ENCODE measurements at regions of chr17 and their contacts with region 1.

Region 1: GRCh38 chr17:37239690-37240334 is 136.0 kb upstream of the C17orf78 start:
- DNase-seq: no peak
- H3K4me3 ChIP-seq: no peak overlapping the region
- H3K27me3 ChIP-seq: no peaks in the 10 kb centered on the region
- CTCF ChIP-seq: peak; percentile 73

Region 2: GRCh38 chr17:36601303-36602029 is 638.3 kb before region 1 on chr17 and contains the start of gene MRM1:
- CTCF ChIA-PET with region 1: interaction called, 23 read pairs
- POLR2A ChIA-PET with region 1: no interaction called
- DNase-seq: peak; percentile 72
- H3K4me3 ChIP-seq: peak within 1 kb of the TSS; percentile 92
- H3K27me3 ChIP-seq: no peaks in the 10 kb centered on the region
- CTCF ChIP-seq: peak; percentile 30
- polyA plus RNA-seq, gene MRM1: 3.0 and 3.9 TPM in 2 replicates

Region 3: DNA sequence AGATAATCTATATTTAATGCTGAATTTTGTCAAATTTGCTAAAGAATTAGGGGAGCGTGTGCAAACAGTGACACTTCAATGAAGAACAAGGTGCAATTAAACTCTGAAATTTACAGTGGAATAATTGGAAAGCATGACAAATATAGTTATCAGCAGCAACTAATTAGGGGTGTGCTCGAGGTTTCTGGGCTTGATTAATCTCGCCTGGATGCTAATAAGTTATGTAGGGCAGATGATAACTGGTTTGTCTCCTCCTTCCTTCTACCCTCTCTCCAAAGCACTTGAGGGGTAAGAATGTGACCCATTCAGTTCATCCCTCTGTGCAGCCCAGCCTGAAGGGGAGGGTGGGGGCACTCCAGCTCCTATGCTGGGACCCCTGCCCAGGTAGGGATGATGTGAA is 616.5 kb before region 1 on chr17:
- CTCF ChIA-PET with region 1: interaction called, 39 read pairs
- POLR2A ChIA-PET with region 1: no interaction called
- DNase-seq: no peak
- H3K4me3 ChIP-seq: no peak overlapping the region
- H3K27me3 ChIP-seq: peaks cover 8% of the 10 kb centered on the region
- CTCF ChIP-seq: no peak

Region 4: DNA sequence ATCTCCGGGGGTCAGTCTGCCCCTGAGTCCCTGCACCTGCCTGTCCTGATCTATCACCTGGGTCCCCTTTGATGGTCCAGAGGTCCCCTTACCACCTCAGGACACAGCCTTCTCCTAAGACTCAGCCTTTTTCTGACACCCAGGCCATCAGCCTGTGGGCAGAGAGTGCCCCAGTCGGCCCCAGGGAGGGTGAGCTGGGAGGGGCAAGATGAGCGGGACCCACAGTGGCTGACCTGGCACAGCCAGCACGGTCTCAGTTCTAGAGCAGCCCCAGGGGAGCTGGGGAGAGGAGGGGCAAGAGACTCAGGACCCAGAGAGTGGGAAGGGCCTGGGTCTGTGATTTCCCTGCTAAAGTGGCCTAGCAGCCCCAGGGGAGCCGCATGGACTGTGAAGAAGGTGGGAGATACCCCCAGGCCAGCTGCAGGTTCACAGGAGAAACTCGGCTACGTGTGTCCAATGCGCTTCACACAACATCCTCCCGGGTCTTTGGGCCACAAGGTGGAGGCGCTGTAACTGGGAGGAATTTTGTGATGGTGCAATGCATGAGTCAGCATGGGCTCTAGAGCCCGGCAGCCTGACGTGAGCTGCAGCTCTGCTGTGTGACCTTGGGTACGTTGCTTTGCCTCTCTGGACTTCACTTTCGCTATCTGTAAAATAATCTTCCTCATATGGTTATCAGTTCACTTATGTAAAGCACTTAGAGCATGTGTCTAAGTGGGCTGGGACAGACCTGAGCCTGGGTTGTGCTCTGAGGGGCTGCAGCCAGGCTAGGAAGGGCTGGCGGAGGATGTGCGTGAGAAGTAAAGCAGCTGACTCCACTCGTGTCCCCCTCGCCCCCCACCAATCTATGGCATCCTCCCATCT is 369.7 kb before region 1 on chr17:
- CTCF ChIA-PET with region 1: no interaction called
- POLR2A ChIA-PET with region 1: no interaction called
- DNase-seq: no peak
- H3K4me3 ChIP-seq: no peak overlapping the region
- H3K27me3 ChIP-seq: peaks cover 15% of the 10 kb centered on the region
- CTCF ChIP-seq: no peak

Region 5: DNA sequence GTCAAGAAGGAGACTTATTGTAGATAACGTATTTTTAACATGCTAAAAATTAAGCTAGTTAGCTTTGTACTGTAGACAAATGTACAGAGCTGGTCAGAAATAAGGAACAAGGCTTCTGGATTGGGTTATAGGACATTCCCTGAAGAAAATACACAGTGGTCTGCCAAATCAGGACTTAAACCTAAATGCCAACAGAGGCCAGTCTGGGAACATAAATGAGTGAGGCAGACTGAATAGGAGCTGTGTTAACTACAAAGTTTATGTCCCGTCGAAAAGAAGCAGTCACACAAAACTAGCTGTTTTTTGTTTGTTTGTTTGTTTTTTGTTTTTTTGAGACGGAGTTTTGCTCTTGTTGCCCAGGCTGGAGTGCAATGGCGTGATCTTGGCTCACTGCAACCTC is 15.6 kb after region 1 on chr17:
- CTCF ChIA-PET with region 1: interaction called, 33 read pairs
- POLR2A ChIA-PET with region 1: interaction called, 8 read pairs
- DNase-seq: no peak
- H3K4me3 ChIP-seq: no peak overlapping the region
- H3K27me3 ChIP-seq: no peaks in the 10 kb centered on the region
- CTCF ChIP-seq: no peak

Region 6: GRCh38 chr17:37358830-37359681 is 119.2 kb after region 1 on chr17:
- CTCF ChIA-PET with region 1: interaction called, 3 read pairs
- POLR2A ChIA-PET with region 1: interaction called, 12 read pairs
- DNase-seq: peak; percentile 59
- H3K4me3 ChIP-seq: peak overlapping the region; percentile 85
- H3K27me3 ChIP-seq: no peaks in the 10 kb centered on the region
- CTCF ChIP-seq: peak; percentile 12; the same call in 1 of the 2 replicates